ENCODE measurements at regions of chr6 and their contacts with region 1.

Region 1: DNA sequence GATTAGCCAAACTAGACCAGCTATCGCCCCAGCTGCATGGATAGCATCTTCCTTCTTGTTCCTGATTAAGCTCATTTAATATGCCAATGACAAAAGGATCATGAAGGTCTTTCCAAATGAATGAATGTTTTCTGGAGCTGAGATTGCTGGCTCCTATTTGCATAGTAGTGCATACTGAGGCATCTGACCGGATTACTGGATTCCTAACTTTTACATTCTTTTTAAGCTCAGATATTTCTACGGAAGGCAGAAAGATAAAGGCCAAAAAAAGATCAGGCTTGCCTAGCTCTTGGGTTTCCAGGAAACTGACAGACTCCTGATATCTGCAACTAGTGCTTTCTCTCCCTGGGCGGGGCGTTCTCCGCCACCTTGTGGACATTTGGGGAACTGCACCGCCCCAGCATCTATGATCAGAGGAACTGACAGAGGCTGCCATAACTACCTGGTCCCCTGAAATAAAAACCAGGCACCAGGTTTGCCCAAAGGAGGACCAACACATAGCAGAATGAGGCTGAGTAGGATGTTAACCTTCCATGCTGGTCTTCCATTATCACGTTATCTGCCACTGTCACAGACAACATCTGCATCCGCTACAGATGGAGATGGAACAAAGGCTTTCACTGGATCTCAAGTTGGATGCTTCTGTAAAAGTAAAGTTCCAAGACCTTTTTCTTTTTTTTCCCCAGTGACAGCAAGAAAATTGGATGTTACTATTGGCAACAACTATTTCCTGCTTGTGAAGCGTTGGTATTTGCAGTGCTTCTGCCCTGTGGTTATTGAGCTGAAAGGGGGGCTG is 33.2 kb downstream of the NT5E start:
- DNase-seq: peak; percentile 62 to 94 (median 78)
- ATAC-seq: peak; percentile 99
- H3K4me3 ChIP-seq: no peak overlapping the region
- H3K4me3 Mint-ChIP-seq: no peak overlapping the region
- H3K27ac ChIP-seq: no peak overlapping the region
- H3K27ac Mint-ChIP-seq: no peak overlapping the region
- H3K4me1 ChIP-seq: peaks cover 7% of the 10 kb centered on the region
- H3K4me1 Mint-ChIP-seq: peaks cover 13% of the 10 kb centered on the region
- H3K27me3 ChIP-seq: no peaks in the 10 kb centered on the region
- H3K27me3 Mint-ChIP-seq: no peaks in the 10 kb centered on the region
- CTCF ChIP-seq: peak; percentile 99

Region 2: DNA sequence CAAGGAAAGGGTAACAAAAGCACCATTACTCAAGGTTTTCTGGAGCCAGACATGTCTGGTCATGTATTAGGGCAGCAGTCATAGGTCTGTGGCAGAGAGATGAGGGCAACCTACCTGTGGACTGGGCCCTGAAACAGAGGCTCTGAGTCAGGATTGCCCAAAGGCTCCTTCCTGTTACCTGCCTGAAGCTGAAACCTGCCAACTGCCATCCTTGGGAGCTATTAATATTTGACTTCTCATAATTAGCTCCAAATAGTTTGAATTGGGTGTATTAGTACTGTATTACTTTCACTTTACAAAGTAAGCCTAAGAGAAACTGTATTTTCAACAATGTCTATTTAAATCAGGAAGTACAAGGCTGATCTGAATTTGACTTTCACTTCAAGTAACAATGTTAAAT is 646.7 kb before region 1 on chr6:
- CTCF ChIA-PET with region 1: no interaction called
- POLR2A ChIA-PET with region 1: no interaction called
- intact Hi-C with region 1: no loop called
- DNase-seq: no peak
- ATAC-seq: no peak
- H3K4me3 ChIP-seq: no peak overlapping the region
- H3K4me3 Mint-ChIP-seq: no peak overlapping the region
- H3K27ac ChIP-seq: no peak overlapping the region
- H3K27ac Mint-ChIP-seq: no peak overlapping the region
- H3K4me1 ChIP-seq: no peaks in the 10 kb centered on the region
- H3K4me1 Mint-ChIP-seq: no peaks in the 10 kb centered on the region
- H3K27me3 ChIP-seq: no peaks in the 10 kb centered on the region
- H3K27me3 Mint-ChIP-seq: no peaks in the 10 kb centered on the region
- CTCF ChIP-seq: no peak

Region 3: DNA sequence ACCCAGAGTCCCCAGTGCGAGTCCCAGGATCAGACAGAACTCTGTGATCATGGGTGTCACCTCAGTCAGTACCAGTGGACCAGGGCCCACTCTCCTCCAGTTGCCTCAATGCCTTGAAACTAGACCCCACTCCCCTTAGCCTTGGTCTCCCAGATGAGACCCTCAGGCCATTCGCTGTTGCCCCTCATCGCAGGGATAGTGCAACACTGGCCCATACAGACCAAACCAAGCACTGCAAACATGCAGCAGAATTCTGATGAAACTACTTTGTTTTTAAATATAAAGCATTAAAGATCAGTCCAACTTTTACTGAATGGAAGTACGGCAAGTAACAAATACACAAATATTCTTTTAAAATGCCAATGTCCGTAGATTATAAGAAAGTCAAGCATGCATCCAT is 134.5 kb before region 1 on chr6:
- CTCF ChIA-PET with region 1: interaction called, 130 read pairs
- POLR2A ChIA-PET with region 1: no interaction called
- intact Hi-C with region 1: no loop called
- DNase-seq: no peak
- ATAC-seq: no peak
- H3K4me3 ChIP-seq: no peak overlapping the region
- H3K4me3 Mint-ChIP-seq: no peak overlapping the region
- H3K27ac ChIP-seq: no peak overlapping the region
- H3K27ac Mint-ChIP-seq: no peak overlapping the region
- H3K4me1 ChIP-seq: no peaks in the 10 kb centered on the region
- H3K4me1 Mint-ChIP-seq: no peaks in the 10 kb centered on the region
- H3K27me3 ChIP-seq: peaks cover 0 to 2% of the 10 kb centered on the region in 2 experiments
- H3K27me3 Mint-ChIP-seq: peaks cover 4% of the 10 kb centered on the region
- CTCF ChIP-seq: no peak

Region 4: DNA sequence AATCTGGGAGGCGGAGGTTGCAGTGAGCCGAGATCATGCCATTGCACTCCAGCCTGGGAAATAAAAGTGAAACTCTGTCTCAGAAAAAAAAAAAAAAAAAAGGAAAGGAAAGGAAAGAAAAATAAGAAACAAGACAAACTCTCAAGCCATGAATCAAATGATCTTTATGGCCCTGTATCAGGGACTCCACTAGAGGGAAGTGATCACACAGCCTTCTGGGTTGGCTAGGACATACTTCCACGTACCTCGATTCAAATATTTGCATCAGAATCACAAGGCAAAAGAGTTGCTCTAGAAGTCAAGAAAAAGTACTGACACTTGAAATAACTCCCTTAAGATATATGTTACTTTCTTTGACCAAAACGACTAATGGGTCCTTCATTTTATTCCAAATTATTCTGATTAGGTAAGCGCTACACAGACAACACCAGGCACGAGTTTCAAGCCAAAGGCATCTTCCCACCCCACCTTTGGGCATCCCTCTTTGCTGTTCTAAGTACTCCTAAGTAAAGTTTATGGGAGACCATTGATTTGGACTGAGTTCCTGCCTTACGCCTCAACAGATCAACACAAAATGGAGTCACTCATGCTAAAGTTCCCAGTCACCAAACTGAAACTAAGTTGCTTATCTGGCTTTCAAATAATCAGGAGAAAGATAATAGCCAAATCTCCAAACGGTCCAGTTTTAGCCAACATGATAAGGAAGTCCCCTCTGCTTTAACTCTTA is 110.8 kb before region 1 on chr6:
- CTCF ChIA-PET with region 1: interaction called, 43 read pairs
- POLR2A ChIA-PET with region 1: no interaction called
- intact Hi-C with region 1: loop called in 1 of 2 experiments (anchors 1 kb)
- DNase-seq: peak in 2 of 9 experiments; percentile 15 to 18
- ATAC-seq: peak; percentile 36
- H3K4me3 ChIP-seq: no peak overlapping the region
- H3K4me3 Mint-ChIP-seq: no peak overlapping the region
- H3K27ac ChIP-seq: no peak overlapping the region
- H3K27ac Mint-ChIP-seq: no peak overlapping the region
- H3K4me1 ChIP-seq: peaks cover 6% of the 10 kb centered on the region
- H3K4me1 Mint-ChIP-seq: peaks cover 19% of the 10 kb centered on the region
- H3K27me3 ChIP-seq: no peaks in the 10 kb centered on the region
- H3K27me3 Mint-ChIP-seq: no peaks in the 10 kb centered on the region
- CTCF ChIP-seq: no peak

Region 5: GRCh38 chr6:85449818-85450759 is 33.0 kb before region 1 on chr6 and contains the start of gene NT5E:
- CTCF ChIA-PET with region 1: interaction called, 187 read pairs
- POLR2A ChIA-PET with region 1: interaction called, 18 read pairs
- intact Hi-C with region 1: loop called in 1 of 2 experiments (anchors 1 kb)
- DNase-seq: peak; percentile 19 to 78 (median 61)
- ATAC-seq: peak; percentile 58
- H3K4me3 ChIP-seq: peak within 1 kb of the TSS; percentile 64 to 65
- H3K4me3 Mint-ChIP-seq: peak within 1 kb of the TSS; percentile 98
- H3K27ac ChIP-seq: peak within 1 kb of the TSS; percentile 40 to 71
- H3K27ac Mint-ChIP-seq: peak within 1 kb of the TSS; percentile 97
- H3K4me1 ChIP-seq: peaks cover 44% of the 10 kb centered on the region
- H3K4me1 Mint-ChIP-seq: peaks cover 62% of the 10 kb centered on the region
- H3K27me3 ChIP-seq: peaks cover 0 to 6% of the 10 kb centered on the region in 2 experiments
- H3K27me3 Mint-ChIP-seq: no peaks in the 10 kb centered on the region
- CTCF ChIP-seq: no peak
- total RNA-seq, gene NT5E: 12.7 to 13.0 TPM

Region 6: GRCh38 chr6:85496009-85496579 is 13.0 kb after region 1 on chr6:
- CTCF ChIA-PET with region 1: interaction called, 36 read pairs
- POLR2A ChIA-PET with region 1: interaction called, 3 read pairs
- intact Hi-C with region 1: no loop called
- DNase-seq: no peak
- ATAC-seq: no peak
- H3K4me3 ChIP-seq: no peak overlapping the region
- H3K4me3 Mint-ChIP-seq: no peak overlapping the region
- H3K27ac ChIP-seq: no peak overlapping the region
- H3K27ac Mint-ChIP-seq: no peak overlapping the region
- H3K4me1 ChIP-seq: peaks cover 8% of the 10 kb centered on the region
- H3K4me1 Mint-ChIP-seq: peaks cover 19% of the 10 kb centered on the region
- H3K27me3 ChIP-seq: no peaks in the 10 kb centered on the region
- H3K27me3 Mint-ChIP-seq: no peaks in the 10 kb centered on the region
- CTCF ChIP-seq: no peak

Region 7: DNA sequence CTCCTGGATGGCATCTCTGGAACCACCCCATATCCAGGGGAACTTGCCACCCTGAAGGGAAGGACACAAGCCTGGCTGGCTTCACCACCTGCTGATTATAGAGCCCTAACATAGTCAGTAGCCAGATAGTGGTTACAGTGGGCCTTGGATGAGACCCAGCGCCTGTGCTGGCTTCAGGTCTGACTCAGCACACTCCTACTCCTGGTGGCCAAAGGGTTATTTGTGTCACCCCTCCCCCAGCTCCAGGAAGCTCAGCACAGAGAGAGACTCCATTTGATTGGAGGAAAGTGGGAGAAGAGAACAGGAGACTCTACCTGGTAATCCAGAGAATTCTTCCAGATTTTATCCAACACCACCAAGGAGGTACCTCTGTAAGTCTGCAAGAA is 97.8 kb after region 1 on chr6:
- CTCF ChIA-PET with region 1: no interaction called
- POLR2A ChIA-PET with region 1: no interaction called
- intact Hi-C with region 1: no loop called
- DNase-seq: no peak
- ATAC-seq: no peak
- H3K4me3 ChIP-seq: no peak overlapping the region
- H3K4me3 Mint-ChIP-seq: no peak overlapping the region
- H3K27ac ChIP-seq: no peak overlapping the region
- H3K27ac Mint-ChIP-seq: peak overlapping the region; percentile 21
- H3K4me1 ChIP-seq: peaks cover 5% of the 10 kb centered on the region
- H3K4me1 Mint-ChIP-seq: peaks cover 51% of the 10 kb centered on the region
- H3K27me3 ChIP-seq: no peaks in the 10 kb centered on the region
- H3K27me3 Mint-ChIP-seq: no peaks in the 10 kb centered on the region
- CTCF ChIP-seq: no peak